HAP-1 (cell line): ENCODE measurements at regions of chr12 and their contacts with region 1.

Region 1: DNA sequence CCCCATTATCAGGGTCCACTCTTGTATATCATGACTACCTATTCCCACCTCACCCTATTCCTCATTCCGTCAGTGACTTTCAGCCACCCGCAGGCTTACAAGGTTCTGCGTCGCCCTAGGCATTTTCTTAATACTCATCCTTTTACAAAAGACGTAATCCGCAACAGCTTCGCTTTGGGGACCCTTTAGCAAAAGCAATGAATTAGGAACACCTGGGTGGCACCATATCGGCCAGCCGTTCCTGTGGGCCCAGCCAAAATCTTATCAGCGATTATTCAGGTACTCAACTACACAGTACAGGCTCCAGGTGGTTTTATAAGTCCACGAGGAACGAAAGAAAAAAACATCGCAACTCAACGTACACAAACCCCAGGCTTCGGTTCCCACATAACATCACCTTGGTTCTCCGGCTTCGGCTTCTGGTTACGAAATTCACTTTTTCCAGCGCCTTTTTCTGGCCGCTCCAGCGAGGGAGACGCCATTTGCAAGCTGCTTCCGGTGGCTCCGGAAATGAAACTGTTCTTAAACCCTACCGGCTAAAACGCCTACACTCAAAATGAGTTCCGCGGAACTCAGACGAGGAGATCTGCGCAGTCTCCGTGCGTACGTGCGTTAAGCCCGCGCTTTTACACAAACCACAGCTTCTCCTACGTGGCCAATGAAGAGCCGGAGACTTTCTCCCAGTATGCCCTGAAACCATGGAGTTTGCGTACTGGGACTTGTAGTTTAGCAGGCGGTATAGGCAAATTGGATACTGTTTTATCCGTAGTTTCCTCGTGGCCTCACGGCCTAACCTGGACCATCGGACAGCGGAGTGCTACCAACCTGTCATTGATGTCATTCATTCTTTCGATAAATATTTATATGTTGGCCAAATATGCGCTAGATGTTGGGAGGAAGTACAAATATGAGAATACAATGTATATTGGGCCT is at the start of gene KRR1:
- DNase-seq: peak; percentile 92 to 98
- H3K4me3 ChIP-seq: peak within 1 kb of the TSS; percentile 77
- H3K4me1 ChIP-seq: peaks cover 12% of the 10 kb centered on the region
- H3K27me3 ChIP-seq: no peaks in the 10 kb centered on the region

Region 2: DNA sequence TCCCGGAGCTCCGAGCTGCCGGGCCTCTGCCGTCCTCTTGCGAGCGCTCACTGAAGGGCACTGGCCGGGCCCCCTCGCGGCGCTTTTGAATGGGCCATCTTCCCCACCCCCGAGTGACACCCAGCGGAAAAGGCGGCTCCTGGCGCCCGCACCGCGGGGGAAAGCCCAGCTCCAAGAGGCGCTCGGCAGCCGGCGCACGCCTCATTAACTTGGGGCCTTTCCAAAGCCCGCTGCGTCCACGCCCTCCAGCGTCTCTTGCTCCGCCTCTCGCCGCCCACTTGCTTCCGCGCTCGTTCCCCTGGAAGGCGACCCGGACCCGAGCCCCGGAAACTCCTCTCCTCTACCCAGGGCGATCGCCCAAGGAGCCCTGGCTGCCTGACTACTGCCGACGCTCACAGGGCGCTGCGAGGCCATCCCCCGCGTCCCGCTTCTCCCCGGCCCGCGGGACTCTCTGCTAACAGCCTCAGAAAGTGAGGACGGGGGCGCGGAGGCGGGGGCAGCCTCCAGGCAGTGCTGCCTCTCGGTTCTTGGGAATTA is 520.2 kb after region 1 on chr12 and contains the start of gene PHLDA1:
- in situ Hi-C with region 1: loop called (anchors 5 kb)
- DNase-seq: peak; percentile 89 to 95
- H3K4me3 ChIP-seq: peak within 1 kb of the TSS; percentile 64
- H3K4me1 ChIP-seq: peaks cover 2% of the 10 kb centered on the region
- H3K27me3 ChIP-seq: no peaks in the 10 kb centered on the region